Activated B cell treated with CpG ODN at 0.5 μM for 24 hours (primary cell): ENCODE measurements at regions of chr5 and their contacts with region 1.

Region 1: DNA sequence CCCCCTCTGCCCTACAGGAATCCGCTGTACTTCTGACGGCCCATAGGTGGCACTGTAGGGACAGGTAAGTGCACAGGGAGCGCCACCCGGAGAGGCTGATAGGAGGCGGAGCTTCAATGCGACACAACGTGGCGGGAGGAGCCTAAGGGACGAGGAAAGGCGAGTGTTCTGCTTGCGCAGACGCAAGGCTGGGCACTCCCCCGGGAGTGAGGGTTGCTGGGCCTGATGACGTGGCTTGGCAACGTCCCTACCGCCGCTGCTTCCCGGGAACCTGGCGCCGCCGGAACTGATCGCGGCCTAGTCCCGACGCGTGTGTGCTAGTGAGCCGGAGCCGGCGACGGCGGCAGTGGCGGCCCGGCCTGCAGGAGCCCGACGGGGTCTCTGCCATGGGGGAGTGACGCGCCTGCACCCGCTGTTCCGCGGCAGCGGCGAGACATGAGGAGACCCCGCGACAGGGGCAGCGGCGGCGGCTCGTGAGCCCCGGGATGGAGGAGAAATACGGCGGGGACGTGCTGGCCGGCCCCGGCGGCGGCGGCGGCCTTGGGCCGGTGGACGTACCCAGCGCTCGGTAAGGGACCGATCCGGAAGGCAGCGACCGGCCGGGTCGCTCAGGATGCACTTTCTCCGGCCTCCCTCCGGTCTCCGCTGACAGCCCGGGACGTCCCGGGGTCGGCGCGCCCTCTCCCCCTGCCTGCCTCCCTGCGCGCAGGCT is at the start of gene SLC30A5:
- DNase-seq: peak; percentile 89
- ATAC-seq: peak; percentile 98
- H3K4me3 Mint-ChIP-seq: peak within 1 kb of the TSS; percentile 92
- H3K27ac Mint-ChIP-seq: peak within 1 kb of the TSS; percentile 89
- H3K4me1 Mint-ChIP-seq: peaks cover 32% of the 10 kb centered on the region
- H3K27me3 Mint-ChIP-seq: no peaks in the 10 kb centered on the region
- CTCF ChIP-seq: peak; percentile 57
- total RNA-seq, gene SLC30A5: 23.2 and 27.5 TPM in 2 replicates

Region 2: GRCh38 chr5:69083412-69083811 is 10.5 kb before region 1 on chr5:
- CTCF ChIA-PET with region 1: interaction called, 13 read pairs
- POLR2A ChIA-PET with region 1: no interaction called
- intact Hi-C with region 1: no loop called
- DNase-seq: no peak
- ATAC-seq: no peak
- H3K4me3 Mint-ChIP-seq: no peak overlapping the region
- H3K27ac Mint-ChIP-seq: no peak overlapping the region
- H3K4me1 Mint-ChIP-seq: no peaks in the 10 kb centered on the region
- H3K27me3 Mint-ChIP-seq: no peaks in the 10 kb centered on the region
- CTCF ChIP-seq: no peak

Region 3: GRCh38 chr5:69166686-69167492 is 73.0 kb after region 1 on chr5 and contains the start of gene CCNB1:
- CTCF ChIA-PET with region 1: interaction called, 9 read pairs
- POLR2A ChIA-PET with region 1: interaction called, 9 read pairs
- intact Hi-C with region 1: loop called (anchors 1 kb)
- DNase-seq: peak; percentile 94
- ATAC-seq: peak; percentile 100
- H3K4me3 Mint-ChIP-seq: peak within 1 kb of the TSS; percentile 96
- H3K27ac Mint-ChIP-seq: peak within 1 kb of the TSS; percentile 89
- H3K4me1 Mint-ChIP-seq: peaks cover 23% of the 10 kb centered on the region
- H3K27me3 Mint-ChIP-seq: no peaks in the 10 kb centered on the region
- CTCF ChIP-seq: no peak
- total RNA-seq, gene CCNB1: 10.6 and 12.7 TPM in 2 replicates

Region 4: GRCh38 chr5:69217548-69218526 is 123.9 kb after region 1 on chr5:
- CTCF ChIA-PET with region 1: no interaction called
- POLR2A ChIA-PET with region 1: interaction called, 9 read pairs
- intact Hi-C with region 1: loop called (anchors 1 kb)
- DNase-seq: peak; percentile 90
- ATAC-seq: peak; percentile 89
- H3K4me3 Mint-ChIP-seq: peak overlapping the region; percentile 100
- H3K27ac Mint-ChIP-seq: peak overlapping the region; percentile 98
- H3K4me1 Mint-ChIP-seq: peaks cover 24% of the 10 kb centered on the region
- H3K27me3 Mint-ChIP-seq: no peaks in the 10 kb centered on the region
- CTCF ChIP-seq: no peak

Region 5: GRCh38 chr5:69334793-69335268 is 240.9 kb after region 1 on chr5:
- CTCF ChIA-PET with region 1: interaction called, 28 read pairs
- POLR2A ChIA-PET with region 1: interaction called, 14 read pairs
- intact Hi-C with region 1: loop called (anchors 1 kb)
- DNase-seq: peak; percentile 56
- ATAC-seq: peak; percentile 72
- H3K4me3 Mint-ChIP-seq: peak overlapping the region; percentile 46
- H3K27ac Mint-ChIP-seq: peak overlapping the region; percentile 59
- H3K4me1 Mint-ChIP-seq: peaks cover 25% of the 10 kb centered on the region
- H3K27me3 Mint-ChIP-seq: no peaks in the 10 kb centered on the region
- CTCF ChIP-seq: no peak

Region 6: GRCh38 chr5:69369369-69370121 is 275.6 kb after region 1 on chr5 and contains the starts of genes AK6, RAD17 and TAF9:
- CTCF ChIA-PET with region 1: interaction called, 8 read pairs
- POLR2A ChIA-PET with region 1: interaction called, 4 read pairs
- intact Hi-C with region 1: loop called (anchors 1 kb)
- DNase-seq: peak; percentile 93
- ATAC-seq: peak; percentile 94
- H3K4me3 Mint-ChIP-seq: peak within 1 kb of the TSS; percentile 97
- H3K27ac Mint-ChIP-seq: peak within 1 kb of the TSS; percentile 98
- H3K4me1 Mint-ChIP-seq: peaks cover 53% of the 10 kb centered on the region
- H3K27me3 Mint-ChIP-seq: no peaks in the 10 kb centered on the region
- CTCF ChIP-seq: no peak
- total RNA-seq, gene AK6: 38.6 and 39.3 TPM in 2 replicates
- total RNA-seq, gene RAD17: 25.9 and 30.6 TPM in 2 replicates
- total RNA-seq, gene TAF9: 44.7 and 45.4 TPM in 2 replicates